ENCODE measurements at regions of chr1 and their contacts with region 1.

Region 1: GRCh38 chr1:247415423-247416361 is at the start of gene NLRP3:
- DNase-seq: peak; percentile 23 to 63 (median 53)
- ATAC-seq: peak; percentile 86
- H3K4me3 ChIP-seq: peak within 1 kb of the TSS; percentile 53
- H3K4me3 Mint-ChIP-seq: peak within 1 kb of the TSS; percentile 75 to 95 (median 91)
- H3K27ac ChIP-seq: peak within 1 kb of the TSS; percentile 61
- H3K27ac Mint-ChIP-seq: peak within 1 kb of the TSS; percentile 4 to 92 (median 86)
- H3K4me1 ChIP-seq: peaks cover 20 to 33% of the 10 kb centered on the region in 2 donors
- H3K4me1 Mint-ChIP-seq: peaks cover 29 to 63% (median 45%) of the 10 kb centered on the region in 7 donors
- H3K27me3 ChIP-seq: no peaks in the 10 kb centered on the region
- H3K27me3 Mint-ChIP-seq: peaks cover 0 to 46% (median 0%) of the 10 kb centered on the region in 5 donors
- total RNA-seq, gene NLRP3: 0.70 to 90.6 (median 4.6) TPM

Region 2: GRCh38 chr1:246506674-246507481 is 908.8 kb before region 1 on chr1 and contains the start of gene SMYD3:
- CTCF ChIA-PET with region 1: no interaction called
- POLR2A ChIA-PET with region 1: no interaction called
- intact Hi-C with region 1: loop called in 1 of 2 experiments (anchors 10 kb)
- DNase-seq: peak; percentile 70 to 81 (median 75)
- ATAC-seq: peak; percentile 93
- H3K4me3 ChIP-seq: peak within 1 kb of the TSS; percentile 78
- H3K4me3 Mint-ChIP-seq: peak within 1 kb of the TSS; percentile 88 to 96 (median 93)
- H3K27ac ChIP-seq: peak within 1 kb of the TSS; percentile 75
- H3K27ac Mint-ChIP-seq: peak within 1 kb of the TSS; percentile 78 to 95 (median 91)
- H3K4me1 ChIP-seq: peaks cover 4 to 6% of the 10 kb centered on the region in 2 donors
- H3K4me1 Mint-ChIP-seq: peaks cover 19 to 41% (median 30%) of the 10 kb centered on the region in 7 donors
- H3K27me3 ChIP-seq: no peaks in the 10 kb centered on the region
- H3K27me3 Mint-ChIP-seq: no peaks in the 10 kb centered on the region
- total RNA-seq, gene SMYD3: 19.5 to 28.6 (median 24.2) TPM

Region 3: DNA sequence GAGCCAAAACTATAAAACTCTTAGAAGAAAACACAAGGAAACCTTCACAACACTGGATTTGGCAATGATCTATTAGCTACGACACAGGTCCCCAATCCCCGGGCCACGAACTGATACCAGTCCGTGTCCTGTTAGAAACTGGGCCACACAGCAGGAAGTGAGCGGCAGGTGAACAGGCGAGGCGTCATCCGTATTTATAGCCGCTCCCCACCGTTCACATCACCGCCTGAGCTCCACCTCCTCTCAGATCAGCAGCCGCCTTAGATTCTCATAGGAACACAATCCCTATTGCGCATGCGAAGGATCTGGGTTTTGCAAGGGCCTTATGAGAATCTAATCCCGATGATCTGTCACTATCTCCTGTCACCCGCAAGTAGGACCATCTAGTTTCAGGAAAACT is 861.5 kb before region 1 on chr1:
- CTCF ChIA-PET with region 1: no interaction called
- POLR2A ChIA-PET with region 1: no interaction called
- intact Hi-C with region 1: no loop called
- DNase-seq: no peak
- ATAC-seq: no peak
- H3K4me3 ChIP-seq: no peak overlapping the region
- H3K4me3 Mint-ChIP-seq: no peak overlapping the region
- H3K27ac ChIP-seq: no peak overlapping the region
- H3K27ac Mint-ChIP-seq: no peak overlapping the region
- H3K4me1 ChIP-seq: no peaks in the 10 kb centered on the region
- H3K4me1 Mint-ChIP-seq: peaks cover 0 to 12% (median 6%) of the 10 kb centered on the region in 7 donors
- H3K27me3 ChIP-seq: no peaks in the 10 kb centered on the region
- H3K27me3 Mint-ChIP-seq: no peaks in the 10 kb centered on the region

Region 4: GRCh38 chr1:247378334-247379073 is 37.2 kb before region 1 on chr1:
- CTCF ChIA-PET with region 1: no interaction called
- POLR2A ChIA-PET with region 1: no interaction called
- intact Hi-C with region 1: no loop called
- DNase-seq: no peak
- ATAC-seq: no peak
- H3K4me3 ChIP-seq: no peak overlapping the region
- H3K4me3 Mint-ChIP-seq: no peak overlapping the region
- H3K27ac ChIP-seq: no peak overlapping the region
- H3K27ac Mint-ChIP-seq: no peak overlapping the region
- H3K4me1 ChIP-seq: no peaks in the 10 kb centered on the region
- H3K4me1 Mint-ChIP-seq: peaks cover 0 to 5% (median 4%) of the 10 kb centered on the region in 7 donors
- H3K27me3 ChIP-seq: no peaks in the 10 kb centered on the region
- H3K27me3 Mint-ChIP-seq: peaks cover 0 to 15% (median 4%) of the 10 kb centered on the region in 5 donors

Region 5: DNA sequence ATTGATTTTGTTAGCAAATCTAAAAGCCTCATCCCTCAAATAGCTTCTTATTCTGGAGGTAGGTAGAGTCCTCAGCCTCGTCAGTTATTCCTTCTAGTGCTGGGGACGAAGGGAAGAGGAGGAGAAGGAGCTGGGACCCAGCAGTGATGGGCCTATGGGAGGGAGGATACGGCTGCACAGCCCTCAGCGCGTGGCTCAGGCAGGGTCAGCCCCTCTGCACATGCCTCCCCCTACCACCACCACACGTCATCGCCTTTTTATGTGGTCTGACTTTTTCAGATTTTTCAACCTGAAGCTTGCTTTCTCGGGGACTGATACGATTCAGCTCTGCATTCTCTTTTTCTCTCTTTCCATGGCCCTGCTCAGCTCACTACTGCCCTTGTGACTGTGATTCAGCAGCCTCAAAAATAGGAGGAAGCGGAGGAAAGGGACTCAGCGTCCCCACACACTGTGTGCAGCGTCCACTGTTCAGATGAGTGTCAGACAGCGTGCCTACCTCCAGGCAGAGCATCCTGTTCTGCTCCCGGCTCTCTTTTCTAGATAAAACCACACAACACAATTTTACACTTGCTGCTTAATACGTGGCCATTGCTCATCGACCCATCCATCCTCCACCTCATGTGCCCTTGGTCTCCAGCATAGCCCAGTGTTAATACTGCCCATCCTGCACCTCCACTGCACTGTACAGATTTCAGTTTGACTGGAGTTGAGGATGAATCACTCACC is 41.4 kb after region 1 on chr1:
- CTCF ChIA-PET with region 1: no interaction called
- POLR2A ChIA-PET with region 1: no interaction called
- intact Hi-C with region 1: loop called in 1 of 2 experiments (anchors 5 kb)
- DNase-seq: peak in 5 of 9 donors; percentile 1 to 23 (median 9)
- ATAC-seq: peak; percentile 82
- H3K4me3 ChIP-seq: no peak overlapping the region
- H3K4me3 Mint-ChIP-seq: peak overlapping the region in 2 of 10 donors; percentile 3 to 19
- H3K27ac ChIP-seq: no peak overlapping the region
- H3K27ac Mint-ChIP-seq: peak overlapping the region in 1 of 9 donors; percentile 49
- H3K4me1 ChIP-seq: peaks cover 0 to 9% of the 10 kb centered on the region in 2 donors
- H3K4me1 Mint-ChIP-seq: peaks cover 0 to 13% (median 5%) of the 10 kb centered on the region in 7 donors
- H3K27me3 ChIP-seq: no peaks in the 10 kb centered on the region
- H3K27me3 Mint-ChIP-seq: peaks cover 5 to 26% (median 10%) of the 10 kb centered on the region in 5 donors

Region 6: DNA sequence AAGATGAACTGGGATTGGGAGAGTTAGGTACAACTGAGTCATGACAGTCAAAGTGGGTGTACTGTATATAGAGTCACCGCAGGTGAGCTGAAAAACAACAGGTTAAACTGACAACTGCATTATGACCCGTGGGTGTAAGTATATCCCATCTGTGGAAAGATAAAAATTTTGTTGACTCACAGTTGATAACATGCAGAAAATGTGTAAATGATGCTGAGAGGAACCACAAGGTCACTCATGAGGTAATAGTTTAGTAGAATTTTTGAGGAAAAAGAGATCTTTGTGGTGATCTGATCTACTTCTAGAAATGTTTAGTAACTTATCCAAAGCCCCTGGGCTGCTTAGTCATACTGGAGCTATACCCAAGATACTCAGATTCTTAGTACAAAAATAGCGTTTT is 119.7 kb after region 1 on chr1:
- CTCF ChIA-PET with region 1: no interaction called
- POLR2A ChIA-PET with region 1: no interaction called
- intact Hi-C with region 1: no loop called
- DNase-seq: no peak
- ATAC-seq: peak; percentile 60
- H3K4me3 ChIP-seq: no peak overlapping the region
- H3K4me3 Mint-ChIP-seq: no peak overlapping the region
- H3K27ac ChIP-seq: no peak overlapping the region
- H3K27ac Mint-ChIP-seq: no peak overlapping the region
- H3K4me1 ChIP-seq: no peaks in the 10 kb centered on the region
- H3K4me1 Mint-ChIP-seq: peaks cover 0 to under 1% (median 0%) of the 10 kb centered on the region in 7 donors
- H3K27me3 ChIP-seq: no peaks in the 10 kb centered on the region
- H3K27me3 Mint-ChIP-seq: peaks cover 1 to 33% (median 20%) of the 10 kb centered on the region in 5 donors

Measured in naive thymus-derived CD4-positive, alpha-beta T cell (primary cell).